Activated CD4-positive, alpha-beta T cell treated with anti-CD3 and anti-CD28 coated beads, Interleukin-2, amount 10 ng/mL, durations not matched to agents 24 days and 14 days (primary cell): ENCODE measurements at regions of chr3 and their contacts with region 1.

Region 1: DNA sequence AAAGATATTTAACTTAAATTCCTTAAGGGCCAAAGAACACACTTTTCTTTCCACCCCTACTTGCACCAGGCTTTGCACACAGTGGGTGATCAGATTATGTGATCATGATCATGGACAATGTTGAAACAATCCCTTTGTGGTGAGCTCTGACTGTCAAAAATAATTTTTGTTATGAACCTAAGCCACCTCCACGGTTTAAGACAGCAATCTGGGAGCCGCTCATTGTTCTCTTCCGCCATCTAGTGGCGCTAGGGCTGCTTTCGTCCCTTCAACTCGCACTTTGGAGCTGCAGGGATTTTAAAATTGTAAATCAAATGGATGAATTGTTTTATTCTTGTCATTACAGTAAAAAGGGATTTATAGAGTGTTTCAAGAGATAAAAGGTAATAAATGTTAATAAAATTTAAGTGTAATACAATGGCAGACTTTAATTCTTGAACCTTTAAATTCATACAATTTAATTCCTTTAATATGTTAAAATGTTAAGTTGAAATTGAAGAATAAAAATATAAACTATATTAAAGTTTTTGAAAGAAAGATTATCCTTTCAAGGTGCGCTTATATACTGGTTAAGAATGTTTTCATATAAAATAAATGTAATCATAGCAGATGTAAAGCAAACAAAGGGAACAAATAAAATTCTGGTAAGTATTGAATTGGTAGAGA is 45.3 kb upstream of the ARL6 start:
- DNase-seq: peak; percentile 88
- H3K4me3 Mint-ChIP-seq: no peak overlapping the region
- H3K27ac Mint-ChIP-seq: no peak overlapping the region
- H3K4me1 Mint-ChIP-seq: no peaks in the 10 kb centered on the region
- H3K27me3 Mint-ChIP-seq: peaks cover 23% of the 10 kb centered on the region

Region 2: DNA sequence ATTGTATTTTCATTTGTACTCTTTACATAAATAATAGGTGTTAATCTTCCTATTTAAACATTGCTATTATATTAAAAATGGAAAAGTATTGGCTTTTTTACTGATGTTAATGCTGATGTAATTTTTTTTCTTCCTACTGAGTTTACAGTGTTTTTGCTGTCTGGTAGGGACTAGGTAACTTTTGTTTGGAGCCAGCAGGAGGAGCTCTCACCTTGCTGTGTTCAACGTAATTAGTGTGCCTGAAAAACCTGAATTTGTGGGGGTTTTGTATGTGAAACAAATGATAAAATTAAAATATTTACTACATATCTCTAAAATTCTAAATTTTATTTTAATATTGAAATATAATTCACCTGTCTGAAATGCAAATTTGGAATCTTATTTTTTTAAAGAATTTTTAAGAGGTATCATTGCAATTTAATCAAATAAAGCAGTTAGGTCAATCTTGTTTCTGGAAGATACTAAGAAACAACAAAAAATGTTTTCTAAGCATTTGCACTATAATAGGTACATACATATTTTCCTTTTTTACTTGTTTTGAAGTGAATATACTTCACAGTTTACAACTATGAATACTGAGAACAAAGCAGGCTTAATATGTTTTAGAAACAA is 856.1 kb before region 1 on chr3:
- intact Hi-C with region 1: loop called (anchors 5 kb)
- DNase-seq: no peak
- H3K4me3 Mint-ChIP-seq: no peak overlapping the region
- H3K27ac Mint-ChIP-seq: no peak overlapping the region
- H3K4me1 Mint-ChIP-seq: no peaks in the 10 kb centered on the region
- H3K27me3 Mint-ChIP-seq: no peaks in the 10 kb centered on the region

Region 3: DNA sequence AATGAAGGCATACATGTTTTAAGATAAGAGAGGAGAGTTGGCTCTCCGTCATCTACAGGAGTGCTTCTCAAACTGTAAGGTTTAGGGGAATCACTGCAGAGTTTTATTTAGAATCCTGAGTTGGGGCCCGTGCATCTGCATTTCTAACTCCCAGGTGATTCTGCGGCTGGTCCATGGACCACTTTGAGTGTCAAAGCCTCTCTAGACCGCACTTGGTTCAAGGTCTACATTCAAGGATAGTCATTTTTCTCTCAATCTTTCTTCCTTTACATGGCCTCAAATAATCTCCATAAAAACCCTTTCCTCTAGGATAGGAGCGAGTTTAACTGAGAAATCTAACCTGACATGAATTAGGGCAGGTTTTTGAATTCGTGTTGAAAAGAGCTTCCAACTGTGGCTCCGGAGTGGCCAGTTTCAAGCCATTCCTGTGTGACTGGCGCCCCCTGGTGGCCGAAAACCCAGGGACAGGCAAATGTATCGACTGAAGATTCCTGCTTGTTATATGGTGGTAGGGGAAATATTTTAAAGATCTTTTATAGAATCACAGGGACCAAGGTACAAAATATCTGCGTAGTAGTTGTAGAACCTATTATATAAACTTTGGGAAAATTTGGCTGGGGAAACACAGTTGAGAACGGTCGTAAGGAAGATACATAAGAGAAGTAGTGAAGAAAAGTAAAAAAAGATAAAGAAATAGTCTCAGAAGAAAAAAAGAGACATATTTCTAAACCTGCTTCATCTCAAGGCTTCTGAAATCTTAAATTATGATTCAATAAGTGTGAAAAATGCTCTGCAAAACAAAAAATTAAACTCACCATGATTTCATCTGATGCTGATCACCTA is 303.9 kb after region 1 on chr3:
- intact Hi-C with region 1: loop called (anchors 1 kb)
- DNase-seq: peak; percentile 97
- H3K4me3 Mint-ChIP-seq: peak overlapping the region; percentile 13
- H3K27ac Mint-ChIP-seq: peak overlapping the region; percentile 25
- H3K4me1 Mint-ChIP-seq: peaks cover 16% of the 10 kb centered on the region
- H3K27me3 Mint-ChIP-seq: no peaks in the 10 kb centered on the region